CD4-positive, alpha-beta T cell (primary cell): ENCODE measurements at regions of chr19 and their contacts with region 1.

Region 1: GRCh38 chr19:46513461-46514236 is 18.0 kb upstream of the PNMA8B start:
- DNase-seq: peak; percentile 60 to 91 (median 80)
- ATAC-seq: peak; percentile 66
- H3K4me3 ChIP-seq: no peak overlapping the region
- H3K4me3 Mint-ChIP-seq: no peak overlapping the region
- H3K27ac ChIP-seq: no peak overlapping the region
- H3K27ac Mint-ChIP-seq: no peak overlapping the region
- H3K4me1 ChIP-seq: peaks cover 22% of the 10 kb centered on the region
- H3K4me1 Mint-ChIP-seq: peaks cover 16% of the 10 kb centered on the region
- H3K27me3 ChIP-seq: peaks cover 0 to 10% of the 10 kb centered on the region in 2 experiments
- H3K27me3 Mint-ChIP-seq: peaks cover 28% of the 10 kb centered on the region
- CTCF ChIP-seq: peak; percentile 64

Region 2: DNA sequence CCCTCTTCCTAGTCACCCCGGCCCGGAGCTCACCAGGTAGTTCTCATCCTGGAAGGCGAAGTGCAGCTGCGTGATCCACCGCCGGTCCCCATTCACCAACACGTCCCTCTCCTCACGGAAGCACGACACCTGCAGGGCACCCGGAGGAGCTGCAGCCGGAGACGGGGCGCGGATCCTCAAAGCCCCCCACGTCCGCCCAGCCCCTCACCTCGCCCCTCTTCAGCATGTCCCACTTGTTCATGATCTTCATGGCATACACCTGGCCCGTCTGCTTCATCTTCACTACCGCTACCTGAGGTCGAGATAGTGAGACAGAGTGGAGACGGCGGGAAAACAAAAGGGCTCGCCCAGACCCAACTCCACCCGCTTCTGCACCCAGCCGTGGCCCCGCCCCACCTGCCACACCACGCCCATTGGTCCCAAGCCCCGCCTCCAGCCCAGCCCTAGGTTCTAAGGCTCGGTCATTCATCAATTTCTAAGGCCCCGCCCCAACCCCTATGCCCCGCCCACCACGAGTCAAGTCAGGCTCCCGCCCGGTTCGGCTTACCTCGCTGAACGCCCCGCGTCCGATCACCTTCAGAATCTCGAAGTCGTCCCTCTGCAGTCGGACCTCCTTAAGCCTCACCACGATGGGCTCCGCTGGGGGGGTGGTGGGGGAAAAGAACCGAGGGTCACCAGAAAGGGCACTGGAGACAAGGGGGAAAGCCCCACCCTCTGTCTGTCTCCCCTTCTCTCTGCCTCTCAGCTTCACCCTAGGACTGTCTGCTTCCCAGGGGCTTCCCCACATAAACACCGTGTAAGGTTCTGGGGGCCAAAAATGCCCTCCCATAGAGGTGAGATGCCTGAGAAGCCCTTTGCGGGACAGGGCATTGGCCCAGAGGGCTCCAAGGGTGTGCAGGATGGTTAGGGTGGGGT is 734.2 kb before region 1 on chr19:
- CTCF ChIA-PET with region 1: no interaction called
- POLR2A ChIA-PET with region 1: no interaction called
- intact Hi-C with region 1: no loop called
- DNase-seq: peak; percentile 61 to 88 (median 76)
- ATAC-seq: peak; percentile 89
- H3K4me3 ChIP-seq: peak overlapping the region; percentile 38
- H3K4me3 Mint-ChIP-seq: peak overlapping the region; percentile 77
- H3K27ac ChIP-seq: no peak overlapping the region
- H3K27ac Mint-ChIP-seq: no peak overlapping the region
- H3K4me1 ChIP-seq: peaks cover 24% of the 10 kb centered on the region
- H3K4me1 Mint-ChIP-seq: peaks cover 23% of the 10 kb centered on the region
- H3K27me3 ChIP-seq: peaks cover 22 to 39% of the 10 kb centered on the region in 2 experiments
- H3K27me3 Mint-ChIP-seq: peaks cover 34% of the 10 kb centered on the region
- CTCF ChIP-seq: peak; percentile 78

Region 3: DNA sequence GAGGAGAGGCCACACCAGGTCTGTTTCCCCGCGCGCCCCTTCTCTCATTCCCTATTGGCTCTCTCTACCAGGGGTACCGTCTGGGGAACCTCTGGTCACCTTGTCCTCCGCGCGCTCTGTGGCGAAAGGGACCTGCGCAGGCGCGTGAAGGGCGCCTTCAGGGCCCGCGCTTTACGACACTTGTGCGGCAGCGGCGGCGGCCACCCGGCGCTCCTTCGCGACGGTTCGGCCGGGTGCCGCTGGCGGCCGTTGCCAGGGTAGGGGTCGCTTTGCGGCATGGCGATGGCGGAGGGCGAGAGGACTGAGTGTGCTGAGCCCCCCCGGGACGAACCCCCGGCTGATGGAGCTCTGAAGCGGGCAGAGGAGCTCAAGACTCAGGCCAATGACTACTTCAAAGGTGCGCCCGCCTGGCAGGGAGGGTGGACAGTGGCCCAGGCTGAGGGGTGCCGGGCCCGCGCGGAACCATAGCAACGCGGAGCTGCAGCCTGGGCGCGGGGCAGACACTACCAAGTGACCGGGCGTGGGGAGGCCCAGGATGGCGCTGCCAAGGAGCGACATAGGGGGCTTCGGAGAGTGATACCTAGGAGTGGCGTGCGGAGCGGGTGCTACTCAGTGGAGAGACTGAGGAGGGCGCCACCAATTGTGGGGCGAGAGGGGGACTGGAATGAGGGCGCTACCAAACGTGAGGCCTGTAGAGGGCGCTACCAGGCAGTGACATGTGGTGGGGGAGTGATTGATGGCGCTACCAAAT is 166.7 kb before region 1 on chr19 and contains the start of gene PPP5C:
- CTCF ChIA-PET with region 1: no interaction called
- POLR2A ChIA-PET with region 1: no interaction called
- intact Hi-C with region 1: no loop called
- DNase-seq: peak; percentile 67 to 93 (median 81)
- ATAC-seq: peak; percentile 84
- H3K4me3 ChIP-seq: peak within 1 kb of the TSS; percentile 100
- H3K4me3 Mint-ChIP-seq: peak within 1 kb of the TSS; percentile 98
- H3K27ac ChIP-seq: peak within 1 kb of the TSS; percentile 72 to 80
- H3K27ac Mint-ChIP-seq: peak within 1 kb of the TSS; percentile 91
- H3K4me1 ChIP-seq: peaks cover 56% of the 10 kb centered on the region
- H3K4me1 Mint-ChIP-seq: peaks cover 58% of the 10 kb centered on the region
- H3K27me3 ChIP-seq: no peaks in the 10 kb centered on the region
- H3K27me3 Mint-ChIP-seq: no peaks in the 10 kb centered on the region
- CTCF ChIP-seq: peak; percentile 10
- total RNA-seq, gene PPP5C: 18.9 to 20.2 TPM

Region 4: GRCh38 chr19:46392243-46392801 is 121.3 kb before region 1 on chr19:
- CTCF ChIA-PET with region 1: no interaction called
- POLR2A ChIA-PET with region 1: no interaction called
- intact Hi-C with region 1: loop called in 1 of 2 experiments (anchors 2 kb)
- DNase-seq: no peak
- ATAC-seq: no peak
- H3K4me3 ChIP-seq: no peak overlapping the region
- H3K4me3 Mint-ChIP-seq: no peak overlapping the region
- H3K27ac ChIP-seq: no peak overlapping the region
- H3K27ac Mint-ChIP-seq: no peak overlapping the region
- H3K4me1 ChIP-seq: peaks cover 3% of the 10 kb centered on the region
- H3K4me1 Mint-ChIP-seq: peaks cover 20% of the 10 kb centered on the region
- H3K27me3 ChIP-seq: no peaks in the 10 kb centered on the region
- H3K27me3 Mint-ChIP-seq: no peaks in the 10 kb centered on the region
- CTCF ChIP-seq: no peak

Region 5: DNA sequence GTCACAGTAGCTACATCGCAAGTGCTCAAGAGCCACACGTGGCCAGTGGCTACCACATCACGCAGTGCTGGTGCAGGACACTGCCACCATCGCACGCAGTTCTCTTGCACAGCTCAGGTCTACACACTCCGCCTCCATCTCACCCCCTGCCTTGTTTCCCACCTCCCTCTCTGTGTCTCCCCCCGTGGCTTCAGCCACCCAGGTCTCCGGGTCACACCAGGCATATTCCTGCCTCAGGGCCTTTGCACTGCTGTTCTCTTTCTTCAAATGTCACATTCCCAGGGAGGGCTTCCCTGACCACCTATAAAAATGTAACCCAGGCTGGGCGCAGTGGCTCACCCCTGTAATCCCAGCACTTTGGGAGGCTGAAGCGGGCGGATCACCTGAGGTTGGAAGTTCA is 110.9 kb before region 1 on chr19:
- CTCF ChIA-PET with region 1: interaction called, 3 read pairs
- POLR2A ChIA-PET with region 1: no interaction called
- intact Hi-C with region 1: loop called (anchors 2 kb)
- DNase-seq: no peak
- ATAC-seq: no peak
- H3K4me3 ChIP-seq: no peak overlapping the region
- H3K4me3 Mint-ChIP-seq: no peak overlapping the region
- H3K27ac ChIP-seq: no peak overlapping the region
- H3K27ac Mint-ChIP-seq: no peak overlapping the region
- H3K4me1 ChIP-seq: peaks cover 20% of the 10 kb centered on the region
- H3K4me1 Mint-ChIP-seq: peaks cover 18% of the 10 kb centered on the region
- H3K27me3 ChIP-seq: peaks cover 48 to 57% of the 10 kb centered on the region in 2 experiments
- H3K27me3 Mint-ChIP-seq: peaks cover 74% of the 10 kb centered on the region
- CTCF ChIP-seq: no peak

Region 6: GRCh38 chr19:46461537-46461936 is 52.1 kb before region 1 on chr19:
- CTCF ChIA-PET with region 1: no interaction called
- POLR2A ChIA-PET with region 1: no interaction called
- intact Hi-C with region 1: no loop called
- DNase-seq: no peak
- ATAC-seq: no peak
- H3K4me3 ChIP-seq: no peak overlapping the region
- H3K4me3 Mint-ChIP-seq: no peak overlapping the region
- H3K27ac ChIP-seq: no peak overlapping the region
- H3K27ac Mint-ChIP-seq: no peak overlapping the region
- H3K4me1 ChIP-seq: no peaks in the 10 kb centered on the region
- H3K4me1 Mint-ChIP-seq: peaks cover 2% of the 10 kb centered on the region
- H3K27me3 ChIP-seq: peaks cover 4 to 6% of the 10 kb centered on the region in 2 experiments
- H3K27me3 Mint-ChIP-seq: peaks cover 47% of the 10 kb centered on the region
- CTCF ChIP-seq: no peak

Region 7: DNA sequence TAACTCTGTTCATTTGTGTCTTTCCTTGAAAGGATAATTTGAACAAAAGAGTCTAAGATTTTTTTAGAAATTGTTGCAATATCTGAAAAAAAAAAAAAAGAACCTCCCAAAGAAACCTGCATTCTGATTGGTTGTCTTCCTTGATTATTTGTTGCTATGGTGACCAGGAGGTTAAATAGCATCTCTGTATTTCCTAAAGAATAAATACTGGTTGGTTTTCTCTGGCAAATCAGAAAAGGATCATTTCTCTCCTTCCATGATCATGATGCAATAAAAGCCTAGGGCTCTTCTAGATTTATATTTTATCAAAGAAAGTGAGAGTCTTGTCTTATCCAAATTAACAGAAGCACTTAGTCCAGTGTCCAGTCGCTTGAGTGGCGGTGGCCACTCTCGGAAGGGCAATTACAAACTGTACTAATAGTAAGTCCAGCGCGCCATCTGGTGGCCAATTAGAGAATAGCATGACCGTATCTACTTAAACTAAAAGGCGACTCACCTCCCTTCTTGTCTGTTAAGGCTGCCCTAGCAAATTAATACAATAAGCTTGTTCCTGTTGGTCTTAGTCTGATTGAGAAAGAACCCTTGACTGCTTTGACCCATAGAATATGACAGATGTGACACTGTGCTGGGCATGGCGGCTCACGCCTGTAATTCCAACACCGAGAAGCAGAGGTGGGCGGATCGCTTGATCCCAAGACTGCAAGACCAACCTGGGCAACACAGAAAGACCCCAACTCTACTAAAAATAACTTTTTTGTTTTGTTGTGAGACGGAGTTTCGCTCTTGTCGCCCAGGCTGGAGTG is 29.0 kb after region 1 on chr19:
- CTCF ChIA-PET with region 1: interaction called, 5 read pairs
- POLR2A ChIA-PET with region 1: no interaction called
- intact Hi-C with region 1: loop called (anchors 1 kb)
- DNase-seq: peak; percentile 65 to 90 (median 76)
- ATAC-seq: peak; percentile 68
- H3K4me3 ChIP-seq: no peak overlapping the region
- H3K4me3 Mint-ChIP-seq: no peak overlapping the region
- H3K27ac ChIP-seq: no peak overlapping the region
- H3K27ac Mint-ChIP-seq: no peak overlapping the region
- H3K4me1 ChIP-seq: peaks cover 13% of the 10 kb centered on the region
- H3K4me1 Mint-ChIP-seq: peaks cover 7% of the 10 kb centered on the region
- H3K27me3 ChIP-seq: no peaks in the 10 kb centered on the region
- H3K27me3 Mint-ChIP-seq: peaks cover 3% of the 10 kb centered on the region
- CTCF ChIP-seq: peak; percentile 97

Region 8: GRCh38 chr19:46571531-46571930 is 57.9 kb after region 1 on chr19:
- CTCF ChIA-PET with region 1: no interaction called
- POLR2A ChIA-PET with region 1: no interaction called
- intact Hi-C with region 1: no loop called
- DNase-seq: peak in 4 of 14 experiments; percentile 13 to 44 (median 30)
- ATAC-seq: peak; percentile 59
- H3K4me3 ChIP-seq: no peak overlapping the region
- H3K4me3 Mint-ChIP-seq: no peak overlapping the region
- H3K27ac ChIP-seq: no peak overlapping the region
- H3K27ac Mint-ChIP-seq: no peak overlapping the region
- H3K4me1 ChIP-seq: peaks cover 18% of the 10 kb centered on the region
- H3K4me1 Mint-ChIP-seq: peaks cover 24% of the 10 kb centered on the region
- H3K27me3 ChIP-seq: no peaks in the 10 kb centered on the region
- H3K27me3 Mint-ChIP-seq: no peaks in the 10 kb centered on the region
- CTCF ChIP-seq: no peak